SK-N-SH (cell line): ENCODE measurements at regions of chr3 and their contacts with region 1.

Region 1: GRCh38 chr3:138417559-138417982 is 16.8 kb upstream of the ESYT3 start:
- DNase-seq: peak; percentile 80
- H3K4me3 ChIP-seq: peak overlapping the region in 1 of 2 experiments; percentile 17; a peak in 1 of 4 replicates
- H3K27ac ChIP-seq: no peak overlapping the region
- H3K4me1 ChIP-seq: no peaks in the 10 kb centered on the region; a peak in 2 of 4 replicates
- H3K27me3 ChIP-seq: no peaks in the 10 kb centered on the region
- CTCF ChIP-seq: peak; percentile 93
- EP300 ChIP-seq: no peak
- RAD21 ChIP-seq: peak; percentile 78

Region 2: DNA sequence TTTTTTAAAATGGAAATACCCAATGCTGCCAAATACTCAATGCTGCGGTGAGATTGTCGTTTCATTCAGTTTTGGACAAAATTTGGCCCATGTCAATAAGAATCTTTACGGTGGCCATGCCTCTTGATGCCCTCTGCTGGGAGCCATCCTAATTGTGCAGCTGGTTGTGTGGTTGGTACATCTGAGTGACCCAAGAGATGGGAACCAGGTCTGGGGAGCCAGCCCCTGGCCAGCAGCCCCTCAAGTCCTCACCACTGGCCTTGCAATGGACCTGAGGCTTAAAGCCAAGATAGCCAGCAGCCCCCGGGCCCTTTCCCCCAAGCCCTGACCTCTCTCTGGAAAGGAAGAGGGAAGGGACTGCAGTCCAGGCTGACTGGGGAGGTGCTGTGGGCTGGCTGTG is 19.6 kb before region 1 on chr3:
- CTCF ChIA-PET with region 1: interaction called, 69 read pairs
- POLR2A ChIA-PET with region 1: no interaction called
- DNase-seq: no peak
- H3K4me3 ChIP-seq: no peak overlapping the region
- H3K27ac ChIP-seq: no peak overlapping the region
- H3K4me1 ChIP-seq: no peaks in the 10 kb centered on the region
- H3K27me3 ChIP-seq: no peaks in the 10 kb centered on the region
- CTCF ChIP-seq: peak; percentile 14; the same call in 1 of the 2 replicates
- EP300 ChIP-seq: no peak
- RAD21 ChIP-seq: no peak

Region 3: DNA sequence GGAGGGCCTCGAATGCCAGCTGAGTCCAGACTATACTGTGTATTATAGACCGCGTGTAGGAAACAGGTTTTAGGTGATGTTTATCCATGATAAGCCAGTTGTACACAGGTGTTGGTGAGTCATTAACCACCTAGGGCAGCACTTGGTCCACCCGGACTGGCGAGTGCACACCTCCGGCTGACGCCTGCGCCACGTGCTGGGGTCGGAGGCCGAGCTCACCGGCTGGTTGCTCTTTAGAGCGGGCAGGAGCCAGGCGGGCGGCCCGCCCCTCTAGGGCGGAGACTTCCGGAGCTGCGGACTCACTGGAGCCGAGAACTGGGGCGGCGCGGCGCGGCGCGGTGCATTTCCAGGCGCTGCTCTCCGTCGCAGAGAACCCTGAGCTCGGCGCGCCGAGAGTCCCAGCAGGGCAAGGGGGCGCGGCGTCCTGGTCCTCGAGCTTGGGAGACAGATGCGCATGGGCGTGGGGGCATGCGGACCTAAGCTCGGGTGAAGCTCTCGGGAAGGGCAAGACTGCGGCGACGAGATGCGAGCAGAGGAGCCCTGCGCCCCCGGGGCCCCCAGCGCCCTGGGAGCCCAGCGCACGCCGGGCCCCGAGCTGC is 16.8 kb after region 1 on chr3 and contains the start of gene ESYT3:
- CTCF ChIA-PET with region 1: interaction called, 32 read pairs
- POLR2A ChIA-PET with region 1: no interaction called
- DNase-seq: peak; percentile 83
- H3K4me3 ChIP-seq: peak within 1 kb of the TSS; percentile 47 to 59
- H3K27ac ChIP-seq: no peak within 1 kb of the TSS
- H3K4me1 ChIP-seq: peaks cover 0 to 10% of the 10 kb centered on the region in 2 experiments; a peak in 1 of 4 replicates
- H3K27me3 ChIP-seq: peaks cover 11% of the 10 kb centered on the region; the same call in 1 of the 2 replicates
- CTCF ChIP-seq: no peak
- EP300 ChIP-seq: no peak
- RAD21 ChIP-seq: no peak
- polyA plus RNA-seq, gene ESYT3: 0.24 and 0.33 TPM in 2 replicates

Region 4: GRCh38 chr3:138657508-138657907 is 239.9 kb after region 1 on chr3:
- CTCF ChIA-PET with region 1: no interaction called
- POLR2A ChIA-PET with region 1: no interaction called
- DNase-seq: no peak
- H3K4me3 ChIP-seq: no peak overlapping the region
- H3K27ac ChIP-seq: no peak overlapping the region
- H3K4me1 ChIP-seq: no peaks in the 10 kb centered on the region
- H3K27me3 ChIP-seq: no peaks in the 10 kb centered on the region
- CTCF ChIP-seq: no peak
- EP300 ChIP-seq: no peak
- RAD21 ChIP-seq: no peak